Activated CD4-positive, alpha-beta memory T cell treated with anti-CD3 and anti-CD28 coated beads for 36 hours (primary cell): ENCODE measurements at regions of chr4 and their contacts with region 1.

Region 1: DNA sequence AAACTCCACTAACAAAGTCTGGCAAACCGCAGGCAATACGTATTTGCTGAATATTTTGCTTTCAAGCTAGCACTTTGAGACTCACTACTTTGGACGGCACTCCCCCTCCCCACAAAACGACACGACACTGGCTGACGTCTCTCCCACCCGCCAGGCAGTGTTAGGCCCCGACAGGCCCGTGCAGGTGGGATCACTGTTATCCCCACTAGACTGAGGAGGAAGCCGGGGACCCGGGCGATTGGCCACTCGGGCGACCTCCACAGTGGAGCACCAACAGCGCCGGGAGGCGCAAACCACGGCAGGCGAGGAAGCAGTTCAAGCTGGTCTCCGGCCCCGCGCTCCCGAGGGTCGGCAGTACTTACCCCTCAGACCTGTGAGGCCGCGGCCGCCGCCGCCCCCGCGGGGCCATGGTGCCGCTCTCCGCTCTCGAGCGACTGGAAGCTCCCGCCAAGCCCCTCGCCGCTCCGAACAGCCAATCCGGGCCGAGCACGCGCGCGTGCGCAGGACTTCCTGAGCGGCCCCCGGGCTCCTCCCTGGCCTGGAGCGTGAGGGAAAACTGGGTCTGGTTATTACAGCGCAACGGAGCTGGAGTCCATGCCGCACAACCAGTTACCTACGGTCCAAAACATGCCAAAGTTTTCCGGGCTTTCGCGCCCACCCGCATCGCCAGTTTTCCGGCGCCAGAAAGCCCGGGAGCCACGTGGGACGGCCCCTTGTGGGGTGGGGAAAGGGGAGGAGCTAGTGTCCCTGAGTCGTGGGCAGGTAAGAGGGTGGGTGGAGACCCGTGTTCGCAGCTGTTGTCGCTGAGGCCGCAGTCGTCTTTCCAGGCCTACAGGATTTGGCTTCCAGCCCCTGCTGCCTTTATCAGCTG is at the start of gene CENPU:
- DNase-seq: peak; percentile 97
- H3K4me3 Mint-ChIP-seq: peak within 1 kb of the TSS; percentile 99
- H3K27ac Mint-ChIP-seq: peak within 1 kb of the TSS; percentile 88
- H3K4me1 Mint-ChIP-seq: peaks cover 24% of the 10 kb centered on the region
- H3K27me3 Mint-ChIP-seq: no peaks in the 10 kb centered on the region
- total RNA-seq, gene CENPU: 82.7 to 87.6 TPM

Region 2: GRCh38 chr4:184417802-184418511 is 315.9 kb before region 1 on chr4:
- CTCF ChIA-PET with region 1: no interaction called
- POLR2A ChIA-PET with region 1: interaction called, 6 read pairs
- intact Hi-C with region 1: loop called (anchors 5 kb)
- DNase-seq: peak; percentile 23
- H3K4me3 Mint-ChIP-seq: peak overlapping the region; percentile 23
- H3K27ac Mint-ChIP-seq: peak overlapping the region; percentile 91
- H3K4me1 Mint-ChIP-seq: peaks cover 90% of the 10 kb centered on the region
- H3K27me3 Mint-ChIP-seq: no peaks in the 10 kb centered on the region

Region 3: DNA sequence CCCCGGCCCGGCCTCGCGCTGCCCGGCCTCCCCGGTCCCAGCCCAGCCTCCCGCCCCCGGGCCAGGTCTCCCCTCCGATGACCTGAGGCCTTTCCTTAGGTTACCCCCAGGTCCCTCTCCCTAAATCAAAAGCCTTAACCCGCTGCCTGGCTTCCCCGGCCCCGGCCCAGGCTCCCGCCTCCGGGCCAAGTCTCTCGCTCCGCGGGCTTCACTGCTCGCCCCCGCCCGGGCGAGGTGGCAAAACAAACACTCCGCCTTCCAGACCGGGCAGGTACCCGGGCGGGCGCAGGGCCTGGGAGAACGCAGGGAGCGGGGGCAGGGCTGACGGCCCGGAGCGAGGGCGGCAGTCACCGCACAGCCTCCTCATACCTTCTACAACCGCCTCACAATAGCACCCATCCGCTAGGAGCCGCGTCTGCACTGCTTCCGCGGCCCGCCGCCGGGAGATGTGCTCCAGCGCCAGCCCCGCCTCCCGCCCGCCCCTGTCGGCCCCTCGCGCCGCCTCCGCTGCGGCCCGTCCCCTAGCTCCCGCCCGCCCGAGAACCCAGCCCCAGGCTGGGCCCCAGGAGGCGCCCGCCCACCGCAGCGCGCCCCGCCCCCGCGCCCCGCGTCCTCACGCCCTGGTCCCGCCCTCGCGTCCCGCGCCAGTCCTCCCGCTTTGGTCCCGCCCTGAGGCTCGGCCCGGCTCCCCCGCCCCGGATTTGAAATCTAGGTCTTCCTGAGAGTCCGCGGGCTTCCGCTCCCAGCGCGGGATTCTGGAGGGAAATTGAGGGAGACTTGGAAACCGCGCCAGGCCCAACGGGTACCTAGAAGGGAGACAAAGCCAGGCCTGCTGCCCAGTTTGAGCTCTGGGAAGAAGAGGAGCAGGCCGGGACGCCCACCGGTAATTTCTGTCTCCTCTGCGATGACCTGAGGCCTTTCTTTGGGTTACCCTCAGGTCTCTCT is 84.6 kb before region 1 on chr4 and contains the starts of genes CASP3 and PRIMPOL:
- CTCF ChIA-PET with region 1: interaction called, 16 read pairs
- POLR2A ChIA-PET with region 1: interaction called, 26 read pairs
- intact Hi-C with region 1: loop called (anchors 1 kb)
- DNase-seq: peak; percentile 98
- H3K4me3 Mint-ChIP-seq: peak within 1 kb of the TSS; percentile 91
- H3K27ac Mint-ChIP-seq: peak within 1 kb of the TSS; percentile 91
- H3K4me1 Mint-ChIP-seq: peaks cover 50% of the 10 kb centered on the region
- H3K27me3 Mint-ChIP-seq: no peaks in the 10 kb centered on the region
- total RNA-seq, gene CASP3: 54.0 to 54.4 TPM
- total RNA-seq, gene PRIMPOL: 23.1 to 27.1 TPM

Region 4: GRCh38 chr4:184745831-184746795 is 12.2 kb after region 1 on chr4:
- CTCF ChIA-PET with region 1: interaction called, 15 read pairs
- POLR2A ChIA-PET with region 1: interaction called, 4 read pairs
- intact Hi-C with region 1: no loop called
- DNase-seq: peak; percentile 80
- H3K4me3 Mint-ChIP-seq: no peak overlapping the region
- H3K27ac Mint-ChIP-seq: no peak overlapping the region
- H3K4me1 Mint-ChIP-seq: peaks cover 8% of the 10 kb centered on the region
- H3K27me3 Mint-ChIP-seq: no peaks in the 10 kb centered on the region

Region 5: GRCh38 chr4:184825896-184826690 is 92.2 kb after region 1 on chr4 and contains the start of gene ACSL1:
- CTCF ChIA-PET with region 1: no interaction called
- POLR2A ChIA-PET with region 1: interaction called, 13 read pairs
- intact Hi-C with region 1: loop called (anchors 2 kb)
- DNase-seq: peak; percentile 84
- H3K4me3 Mint-ChIP-seq: peak within 1 kb of the TSS; percentile 87
- H3K27ac Mint-ChIP-seq: peak within 1 kb of the TSS; percentile 75
- H3K4me1 Mint-ChIP-seq: peaks cover 37% of the 10 kb centered on the region
- H3K27me3 Mint-ChIP-seq: no peaks in the 10 kb centered on the region
- total RNA-seq, gene ACSL1: 22.0 to 22.2 TPM

Region 6: GRCh38 chr4:185005216-185005819 is 271.4 kb after region 1 on chr4:
- CTCF ChIA-PET with region 1: no interaction called
- POLR2A ChIA-PET with region 1: no interaction called
- intact Hi-C with region 1: no loop called
- DNase-seq: peak; percentile 87
- H3K4me3 Mint-ChIP-seq: no peak overlapping the region
- H3K27ac Mint-ChIP-seq: no peak overlapping the region
- H3K4me1 Mint-ChIP-seq: peaks cover 7% of the 10 kb centered on the region
- H3K27me3 Mint-ChIP-seq: peaks cover 30% of the 10 kb centered on the region